K562 (cell line): ENCODE measurements at regions of chr2 and their contacts with region 1.

Region 1: GRCh38 chr2:135004005-135004746 is 43.1 kb downstream of the MAP3K19 start:
- DNase-seq: peak; percentile 77 to 82 (median 81)
- ATAC-seq: peak; percentile 99
- H3K4me3 ChIP-seq: no peak overlapping the region
- H3K27ac ChIP-seq: no peak overlapping the region
- H3K4me1 ChIP-seq: peaks cover 0 to 8% of the 10 kb centered on the region in 2 experiments; a peak in 2 of 5 replicates
- H3K27me3 ChIP-seq: no peaks in the 10 kb centered on the region
- CTCF ChIP-seq: peak; percentile 91 to 96 (median 92)
- EP300 ChIP-seq: no peak
- POLR2A ChIP-seq: no peak
- RAD21 ChIP-seq: peak; percentile 93 to 96

Region 2: DNA sequence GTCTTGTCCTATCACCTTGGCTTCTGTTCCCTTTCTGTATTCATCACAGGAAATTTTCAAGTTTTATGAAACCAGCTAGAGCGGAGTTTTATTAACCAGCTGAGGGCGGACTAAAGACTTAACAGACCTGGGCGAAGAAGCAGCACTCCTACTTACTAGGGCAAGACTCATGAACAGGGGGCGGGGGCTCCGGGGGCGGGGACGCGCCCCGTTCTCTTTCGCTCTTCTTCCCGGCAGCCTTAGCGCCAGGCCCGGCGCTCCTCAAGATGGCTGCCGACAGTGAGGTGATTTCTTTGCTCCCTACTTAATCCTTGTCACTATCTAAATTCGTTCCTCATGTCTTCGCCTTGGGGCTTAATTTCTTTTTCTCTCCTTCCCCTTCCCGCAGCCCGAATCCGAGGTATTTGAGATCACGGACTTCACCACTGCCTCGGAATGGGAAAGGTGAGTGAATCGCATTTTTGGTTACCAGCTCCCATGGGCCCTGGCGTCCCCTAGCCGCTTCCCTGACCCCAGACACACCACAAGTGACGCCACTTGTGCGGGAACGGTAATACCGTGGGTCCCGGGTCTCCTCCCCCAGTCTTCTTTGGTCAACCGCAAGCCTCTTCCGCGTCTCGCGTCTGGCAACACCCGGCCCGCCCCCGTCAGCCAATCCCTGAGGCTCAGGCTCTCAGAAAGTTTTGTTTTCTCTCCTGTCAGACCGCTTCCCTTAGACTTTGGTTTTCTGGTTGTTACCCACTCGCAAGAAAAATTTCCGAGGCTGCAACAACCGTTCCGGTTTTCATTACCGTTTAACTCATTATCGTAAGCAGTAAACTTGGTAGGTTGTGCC is 48.1 kb after region 1 on chr2 and contains the start of gene RAB3GAP1:
- CTCF ChIA-PET with region 1: no interaction called
- POLR2A ChIA-PET with region 1: interaction called, 3 read pairs
- in situ Hi-C with region 1: no loop called
- intact Hi-C with region 1: loop called (anchors 2 kb)
- DNase-seq: peak; percentile 89 to 92 (median 90)
- ATAC-seq: peak; percentile 90
- H3K4me3 ChIP-seq: peak within 1 kb of the TSS; percentile 56
- H3K27ac ChIP-seq: peak within 1 kb of the TSS; percentile 85
- H3K4me1 ChIP-seq: peaks cover 12 to 19% of the 10 kb centered on the region in 2 experiments; a peak in 4 of 5 replicates
- H3K27me3 ChIP-seq: no peaks in the 10 kb centered on the region
- CTCF ChIP-seq: no peak
- EP300 ChIP-seq: peak; percentile 7; the same call in 1 of the 2 replicates
- POLR2A ChIP-seq: peak; percentile 98
- RAD21 ChIP-seq: 0 out of 4 replicates have a peak, but pooled peaks of 1 of the 2 experiments have one; percentile 8
- polyA plus RNA-seq, gene RAB3GAP1: 15.5 to 35.6 TPM

Region 3: GRCh38 chr2:135258193-135258592 is 254.0 kb after region 1 on chr2:
- CTCF ChIA-PET with region 1: no interaction called
- POLR2A ChIA-PET with region 1: no interaction called
- in situ Hi-C with region 1: no loop called
- intact Hi-C with region 1: loop called (anchors 5 kb)
- DNase-seq: peak in 1 of 4 experiments; percentile 6
- ATAC-seq: peak; percentile 81
- H3K4me3 ChIP-seq: no peak overlapping the region
- H3K27ac ChIP-seq: no peak overlapping the region
- H3K4me1 ChIP-seq: no peaks in the 10 kb centered on the region
- H3K27me3 ChIP-seq: no peaks in the 10 kb centered on the region
- CTCF ChIP-seq: peak in 2 of 3 experiments; percentile 40 to 41; a peak in 3 of 6 replicates
- EP300 ChIP-seq: no peak
- POLR2A ChIP-seq: no peak
- RAD21 ChIP-seq: peak in 1 of 2 experiments; percentile 56; a peak in 2 of 4 replicates

Region 4: DNA sequence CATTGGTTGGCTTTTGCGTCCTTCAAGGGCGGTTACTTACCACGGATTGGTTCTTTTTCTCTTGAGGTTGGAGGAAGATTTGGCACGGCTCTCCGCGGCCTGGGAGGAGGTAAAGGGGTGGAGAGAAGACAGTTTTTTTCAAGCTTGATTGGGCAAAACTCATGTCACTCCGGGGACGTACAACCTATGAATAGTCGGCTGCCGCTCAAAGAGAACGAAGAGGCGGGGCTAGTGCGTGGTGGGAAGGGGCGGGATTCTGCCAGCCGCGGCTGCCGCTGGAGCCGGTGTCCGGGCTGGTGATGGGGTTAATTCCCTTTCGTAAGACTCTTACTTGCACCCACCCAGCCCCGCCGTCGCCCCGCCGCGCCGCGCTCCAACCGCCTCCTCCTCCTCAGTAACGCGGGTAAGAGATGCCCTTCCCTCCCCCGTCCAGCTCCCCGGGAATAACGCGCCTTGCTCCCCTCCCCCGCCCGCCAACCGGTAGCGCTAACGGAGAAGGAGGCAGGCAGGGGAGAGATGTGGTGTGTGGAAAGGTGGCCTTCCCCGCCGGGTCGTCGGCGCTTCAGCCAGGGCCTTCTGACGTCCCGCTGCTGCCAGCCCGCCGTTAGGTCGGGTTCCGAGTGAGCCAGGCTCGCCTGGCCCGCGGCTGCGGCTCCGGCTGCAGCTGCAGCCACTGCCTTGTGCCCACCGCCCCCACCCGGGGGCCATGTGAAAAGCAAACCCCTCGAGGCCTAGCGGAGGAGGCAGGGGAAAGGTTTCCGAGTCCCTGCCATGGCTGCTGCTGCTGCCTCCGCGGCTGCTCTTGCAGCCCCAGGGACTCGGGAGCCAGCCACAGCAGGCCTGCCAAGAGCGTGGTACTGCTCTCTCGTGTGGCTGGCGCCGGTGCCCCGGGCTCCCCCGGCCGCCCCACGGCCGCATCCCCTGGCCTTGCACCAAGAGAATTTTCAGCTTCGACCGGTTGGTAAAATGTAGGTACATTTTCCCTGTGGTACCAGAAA is 527.4 kb after region 1 on chr2 and contains the start of gene R3HDM1:
- CTCF ChIA-PET with region 1: interaction called, 4 read pairs
- POLR2A ChIA-PET with region 1: no interaction called
- in situ Hi-C with region 1: no loop called
- intact Hi-C with region 1: loop called (anchors 5 kb)
- DNase-seq: peak; percentile 96 to 99 (median 98)
- ATAC-seq: peak; percentile 90
- H3K4me3 ChIP-seq: peak within 1 kb of the TSS; percentile 66
- H3K27ac ChIP-seq: peak within 1 kb of the TSS; percentile 97
- H3K4me1 ChIP-seq: peaks cover 0 to 15% of the 10 kb centered on the region in 2 experiments; a peak in 3 of 5 replicates
- H3K27me3 ChIP-seq: no peaks in the 10 kb centered on the region
- CTCF ChIP-seq: peak in 2 of 3 experiments; percentile 29 to 35; a peak in 4 of 6 replicates
- EP300 ChIP-seq: no peak
- POLR2A ChIP-seq: peak; percentile 78
- RAD21 ChIP-seq: peak in 1 of 2 experiments; percentile 37; a peak in 1 of 4 replicates
- polyA plus RNA-seq, gene R3HDM1: 12.4 to 20.8 TPM

Region 5: DNA sequence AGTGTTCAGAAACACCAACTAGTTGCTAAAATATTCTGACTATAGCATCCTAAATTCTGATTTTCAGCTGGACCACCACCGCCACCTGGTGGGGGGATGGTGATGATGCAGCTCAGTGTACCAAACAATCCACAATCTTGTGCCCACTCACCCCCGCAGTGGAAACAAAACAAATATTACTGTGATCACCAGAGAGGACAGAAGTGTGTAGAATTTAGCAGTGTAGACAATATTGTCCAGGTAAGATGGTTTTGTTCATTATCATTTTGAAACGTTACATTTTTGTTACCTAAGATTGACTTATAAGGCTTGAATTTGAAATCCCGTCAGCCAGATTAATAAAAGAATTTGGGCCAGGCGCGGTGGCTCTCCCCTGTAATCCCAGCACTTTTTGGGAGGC is 705.8 kb after region 1 on chr2:
- CTCF ChIA-PET with region 1: interaction called, 13 read pairs
- POLR2A ChIA-PET with region 1: no interaction called
- in situ Hi-C with region 1: no loop called
- intact Hi-C with region 1: loop called (anchors 1 kb)
- DNase-seq: peak; percentile 60 to 70 (median 66)
- ATAC-seq: peak; percentile 90
- H3K4me3 ChIP-seq: no peak overlapping the region
- H3K27ac ChIP-seq: no peak overlapping the region
- H3K4me1 ChIP-seq: no peaks in the 10 kb centered on the region
- H3K27me3 ChIP-seq: no peaks in the 10 kb centered on the region
- CTCF ChIP-seq: peak; percentile 72 to 92 (median 87)
- EP300 ChIP-seq: no peak
- POLR2A ChIP-seq: no peak
- RAD21 ChIP-seq: peak; percentile 76 to 81

Region 6: GRCh38 chr2:136384531-136385303 is 1380.5 kb after region 1 on chr2:
- CTCF ChIA-PET with region 1: no interaction called
- POLR2A ChIA-PET with region 1: no interaction called
- in situ Hi-C with region 1: loop called (anchors 25 kb)
- intact Hi-C with region 1: loop called (anchors 10 kb)
- DNase-seq: peak; percentile 17 to 24 (median 20)
- ATAC-seq: peak; percentile 91
- H3K4me3 ChIP-seq: no peak overlapping the region
- H3K27ac ChIP-seq: no peak overlapping the region
- H3K4me1 ChIP-seq: no peaks in the 10 kb centered on the region
- H3K27me3 ChIP-seq: no peaks in the 10 kb centered on the region
- CTCF ChIP-seq: peak; percentile 57 to 62 (median 61); a peak in 5 of 6 replicates
- EP300 ChIP-seq: no peak
- POLR2A ChIP-seq: no peak
- RAD21 ChIP-seq: peak; percentile 56 to 72